A673 (cell line): ENCODE measurements at regions of chr10 and their contacts with region 1.

Region 1: DNA sequence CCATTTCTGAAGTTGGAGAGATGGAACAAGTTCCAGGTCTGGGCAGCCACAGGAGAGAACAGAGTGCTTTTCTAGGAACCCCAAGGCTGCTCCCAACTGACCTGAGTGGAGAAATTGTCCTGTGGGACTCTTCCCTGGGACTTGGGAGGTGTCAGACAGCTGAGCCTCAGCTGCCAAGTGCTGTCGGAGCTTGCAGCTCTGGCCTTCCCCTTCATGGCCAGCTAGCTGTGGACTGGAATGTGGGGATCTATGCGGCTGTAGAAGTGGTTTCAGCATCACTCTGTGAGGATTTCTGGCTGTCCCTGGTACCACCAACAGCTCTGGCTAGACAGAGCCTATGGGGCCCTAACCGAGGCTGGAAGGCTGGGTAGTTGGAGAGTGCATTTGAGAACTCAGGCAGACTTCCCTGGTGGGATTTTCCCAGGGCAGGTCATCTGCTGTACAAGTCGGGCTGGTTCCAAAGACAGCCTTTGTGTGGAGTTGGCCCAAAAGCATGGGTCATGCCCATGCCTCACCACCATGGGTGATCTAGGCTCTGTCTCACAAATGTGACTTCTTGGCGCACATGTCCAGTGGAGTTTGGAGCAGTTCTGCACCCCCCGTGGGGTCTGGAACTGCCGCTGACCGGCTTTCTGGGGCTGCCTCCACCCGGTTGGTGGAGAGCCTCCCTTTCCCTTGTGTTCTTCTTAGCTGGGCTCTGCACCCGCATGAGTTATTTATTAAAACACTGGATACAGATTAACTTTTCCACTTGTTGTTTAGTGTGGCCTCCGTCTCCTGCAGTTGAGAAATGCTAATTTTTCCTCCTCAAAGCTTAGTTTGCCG is 10.9 kb downstream of the SUFU start:
- DNase-seq: no peak
- H3K4me3 ChIP-seq: no peak overlapping the region
- H3K27ac ChIP-seq: no peak overlapping the region
- H3K4me1 ChIP-seq: no peaks in the 10 kb centered on the region
- H3K27me3 ChIP-seq: no peaks in the 10 kb centered on the region
- CTCF ChIP-seq: no peak

Region 2: DNA sequence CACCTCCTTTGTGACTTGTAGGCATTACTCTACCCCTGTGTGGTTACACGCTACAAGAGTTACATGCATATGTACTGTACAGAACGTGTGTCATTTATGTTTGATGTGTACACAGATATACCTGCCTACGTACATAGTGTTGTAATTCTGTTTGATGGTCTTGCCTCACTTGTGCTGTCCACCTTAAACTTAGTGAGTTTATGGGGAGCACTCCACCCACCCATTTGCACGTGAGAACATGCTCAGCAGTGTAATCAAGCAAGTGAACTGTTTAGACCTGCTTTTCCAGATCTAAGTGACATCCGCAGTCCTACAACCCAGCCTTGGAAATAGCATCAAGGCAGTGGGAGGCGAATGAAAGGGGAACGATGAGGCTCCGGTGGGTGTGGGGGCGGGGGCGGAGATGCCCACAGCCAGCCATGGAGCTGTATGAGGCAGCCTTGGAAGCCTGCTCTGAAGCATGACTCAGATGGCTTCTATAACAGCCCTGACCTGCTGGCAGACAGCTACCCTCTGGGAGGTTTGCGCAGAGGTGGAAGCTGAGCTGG is 41.2 kb after region 1 on chr10:
- CTCF ChIA-PET with region 1: no interaction called
- POLR2A ChIA-PET with region 1: interaction called, 12 read pairs
- intact Hi-C with region 1: no loop called
- DNase-seq: no peak
- H3K4me3 ChIP-seq: no peak overlapping the region
- H3K27ac ChIP-seq: no peak overlapping the region
- H3K4me1 ChIP-seq: no peaks in the 10 kb centered on the region
- H3K27me3 ChIP-seq: no peaks in the 10 kb centered on the region
- CTCF ChIP-seq: no peak

Region 3: DNA sequence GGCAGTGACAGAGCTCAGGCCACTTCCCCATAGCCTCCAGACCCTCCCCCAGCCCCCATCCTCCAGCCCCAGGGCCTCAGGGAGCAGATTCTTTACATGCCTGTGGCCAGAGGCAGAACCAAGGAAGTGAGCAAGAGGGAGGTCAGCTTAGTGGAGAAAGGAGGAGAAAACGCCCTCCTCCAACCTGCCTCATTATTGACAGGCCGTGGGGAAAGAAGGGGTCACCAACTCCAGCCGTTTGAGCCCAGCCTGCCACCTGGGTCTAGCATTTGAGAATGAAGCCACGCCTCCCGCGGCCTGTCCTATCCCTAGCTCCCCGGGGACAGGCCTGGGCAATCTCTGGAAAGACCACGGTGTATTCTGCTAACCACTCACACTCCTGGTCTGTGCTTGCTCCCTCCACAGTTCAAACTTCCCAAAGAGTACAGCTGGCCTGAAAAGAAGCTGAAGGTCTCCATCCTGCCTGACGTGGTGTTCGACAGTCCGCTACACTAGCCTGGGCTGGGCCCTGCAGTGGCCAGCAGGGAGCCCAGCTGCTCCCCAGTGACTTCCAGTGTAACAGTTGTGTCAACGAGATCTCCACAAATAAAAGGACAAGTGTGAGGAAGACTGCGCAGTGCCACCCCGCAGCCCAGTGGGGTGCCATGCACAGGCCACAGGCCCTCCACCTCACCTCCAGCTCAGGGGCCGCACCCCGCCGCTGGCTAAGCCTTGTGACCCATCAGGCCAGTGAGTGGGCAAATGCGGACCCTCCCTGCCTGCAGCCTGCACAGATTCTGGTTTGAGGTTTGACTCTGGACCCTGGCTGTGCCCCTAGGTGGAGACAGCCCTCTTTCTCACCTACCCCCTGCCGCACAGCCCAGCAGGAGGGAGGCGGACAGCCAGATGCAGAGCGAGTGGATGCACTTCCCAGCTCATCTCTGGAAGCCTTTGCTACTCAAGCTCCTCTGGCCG is 115.2 kb after region 1 on chr10:
- CTCF ChIA-PET with region 1: no interaction called
- POLR2A ChIA-PET with region 1: no interaction called
- intact Hi-C with region 1: no loop called
- DNase-seq: no peak
- H3K4me3 ChIP-seq: no peak overlapping the region
- H3K27ac ChIP-seq: peak overlapping the region; percentile 42
- H3K4me1 ChIP-seq: peaks cover 12% of the 10 kb centered on the region
- H3K27me3 ChIP-seq: no peaks in the 10 kb centered on the region
- CTCF ChIP-seq: no peak